ENCODE measurements at regions of chr15 and their contacts with region 1.

Region 1: GRCh38 chr15:85044251-85044853 is 62.7 kb downstream of the PDE8A start:
- DNase-seq: peak; percentile 37
- H3K4me3 ChIP-seq: no peak overlapping the region
- H3K27ac ChIP-seq: no peak overlapping the region
- H3K27me3 ChIP-seq: no peaks in the 10 kb centered on the region
- CTCF ChIP-seq: peak; percentile 76

Region 2: GRCh38 chr15:84955089-84955848 is 89.1 kb before region 1 on chr15:
- CTCF ChIA-PET with region 1: interaction called, 24 read pairs
- POLR2A ChIA-PET with region 1: interaction called, 3 read pairs
- DNase-seq: peak; percentile 52
- H3K4me3 ChIP-seq: peak overlapping the region; percentile 23; the same call in 1 of the 2 replicates
- H3K27ac ChIP-seq: no peak overlapping the region
- H3K27me3 ChIP-seq: no peaks in the 10 kb centered on the region
- CTCF ChIP-seq: peak; percentile 94

Region 3: GRCh38 chr15:85022860-85023403 is 21.4 kb before region 1 on chr15:
- CTCF ChIA-PET with region 1: interaction called, 11 read pairs
- POLR2A ChIA-PET with region 1: interaction called, 3 read pairs
- DNase-seq: no peak
- H3K4me3 ChIP-seq: no peak overlapping the region
- H3K27ac ChIP-seq: no peak overlapping the region
- H3K27me3 ChIP-seq: no peaks in the 10 kb centered on the region
- CTCF ChIP-seq: no peak

Region 4: DNA sequence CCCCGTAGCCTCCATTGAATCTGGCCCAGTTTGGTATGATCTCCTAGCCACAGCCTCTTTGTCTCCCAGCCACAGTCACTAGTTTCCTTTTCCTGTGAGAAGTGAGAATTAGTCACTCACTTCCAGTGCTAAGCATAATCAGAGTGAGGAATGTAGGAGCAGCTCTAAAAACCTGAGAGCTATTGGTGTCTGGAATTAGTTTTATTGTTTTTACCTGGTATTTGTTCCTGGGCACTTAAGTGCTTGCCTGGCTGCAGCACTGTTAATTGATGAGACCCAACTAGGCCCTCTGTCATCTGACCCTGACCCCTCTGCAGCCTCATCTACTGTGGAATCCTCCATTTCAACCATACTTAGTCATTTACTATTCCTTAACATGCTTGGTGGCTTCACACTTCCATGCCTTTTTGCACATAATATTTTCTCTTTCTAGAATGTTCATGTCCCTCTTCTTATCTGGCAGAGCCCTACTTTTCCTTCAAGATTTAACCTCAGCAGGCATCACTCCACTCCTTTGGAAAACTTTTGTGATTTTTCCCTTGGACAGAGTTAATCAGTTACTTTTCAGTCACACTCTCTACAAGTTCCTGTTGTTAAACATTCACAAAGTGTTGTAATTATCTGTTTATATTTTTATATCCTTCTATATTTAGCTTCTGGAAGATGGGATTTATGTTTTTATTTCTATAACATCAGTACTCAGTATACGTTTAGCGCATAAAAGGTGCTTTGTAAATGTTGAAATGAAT is 13.9 kb before region 1 on chr15:
- CTCF ChIA-PET with region 1: interaction called, 15 read pairs
- POLR2A ChIA-PET with region 1: interaction called, 3 read pairs
- DNase-seq: no peak
- H3K4me3 ChIP-seq: no peak overlapping the region
- H3K27ac ChIP-seq: no peak overlapping the region
- H3K27me3 ChIP-seq: no peaks in the 10 kb centered on the region
- CTCF ChIP-seq: no peak

Region 5: DNA sequence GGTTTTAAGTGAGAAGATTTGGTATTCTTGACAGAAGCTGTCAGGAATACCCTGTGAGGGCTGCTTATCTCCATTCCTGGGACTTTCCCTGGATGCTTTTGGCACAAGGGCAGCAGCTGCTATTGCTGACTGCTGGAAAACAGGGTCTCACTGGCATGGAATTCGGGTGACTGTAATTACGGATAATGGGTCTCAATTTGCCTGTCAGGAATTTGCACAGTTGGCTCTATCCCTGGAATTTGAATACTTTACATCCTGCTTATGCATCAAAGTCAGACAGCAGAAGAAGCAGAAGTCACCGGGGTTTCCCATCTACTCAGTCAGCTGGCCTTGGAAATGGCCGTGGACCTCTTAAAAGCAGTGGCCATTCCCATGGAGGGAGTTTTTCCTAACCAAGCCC is 310.1 kb after region 1 on chr15:
- CTCF ChIA-PET with region 1: no interaction called
- POLR2A ChIA-PET with region 1: no interaction called
- DNase-seq: no peak
- H3K4me3 ChIP-seq: no peak overlapping the region
- H3K27ac ChIP-seq: peak overlapping the region; percentile 21
- H3K27me3 ChIP-seq: no peaks in the 10 kb centered on the region
- CTCF ChIP-seq: no peak

Region 6: GRCh38 chr15:85810075-85810474 is 765.7 kb after region 1 on chr15:
- CTCF ChIA-PET with region 1: no interaction called
- POLR2A ChIA-PET with region 1: no interaction called
- DNase-seq: no peak
- H3K4me3 ChIP-seq: no peak overlapping the region
- H3K27ac ChIP-seq: no peak overlapping the region
- H3K27me3 ChIP-seq: no peaks in the 10 kb centered on the region
- CTCF ChIP-seq: no peak